ENCODE measurements at regions of chr3 and their contacts with region 1.

Region 1: GRCh38 chr3:127970966-127971592 is 56.0 kb downstream of the KBTBD12 start:
- DNase-seq: peak; percentile 60
- ATAC-seq: peak; percentile 86
- H3K4me3 ChIP-seq: no peak overlapping the region
- H3K27ac ChIP-seq: no peak overlapping the region
- H3K4me1 ChIP-seq: no peaks in the 10 kb centered on the region
- H3K27me3 ChIP-seq: peaks cover 51% of the 10 kb centered on the region
- CTCF ChIP-seq: peak; percentile 72
- POLR2A ChIP-seq: no peak
- RAD21 ChIP-seq: peak; percentile 86

Region 2: DNA sequence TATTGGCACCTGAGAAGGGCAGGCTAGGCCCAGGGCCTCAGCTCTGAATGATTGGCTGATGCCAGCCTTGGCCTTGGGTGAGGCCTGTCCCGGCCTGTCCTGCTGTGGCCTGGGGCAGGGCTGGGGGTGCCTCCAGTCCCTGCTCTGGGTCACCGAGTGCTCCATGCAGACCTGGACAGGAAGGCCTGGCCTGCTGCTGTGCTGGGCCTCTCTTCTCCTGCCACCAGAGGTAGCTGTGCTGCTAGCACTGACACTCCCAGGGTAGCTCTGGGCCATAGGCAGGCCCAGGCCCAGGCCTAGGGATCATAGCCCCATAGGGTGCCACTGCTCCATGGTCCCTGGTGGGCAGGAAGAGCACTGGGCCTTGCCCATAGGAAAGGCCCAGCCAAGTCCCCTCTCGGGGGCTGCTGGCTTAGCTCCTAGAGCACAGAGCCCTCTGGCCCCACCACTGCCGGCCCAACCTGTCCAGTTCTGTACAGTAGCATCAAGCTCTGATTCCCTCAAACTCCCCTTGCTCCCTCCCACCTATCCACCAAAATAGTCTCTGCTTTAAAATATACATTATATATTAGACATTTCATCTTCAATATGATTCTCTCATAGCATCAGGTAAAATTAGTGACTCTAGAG is 280.1 kb before region 1 on chr3:
- CTCF ChIA-PET with region 1: interaction called, 3 read pairs
- POLR2A ChIA-PET with region 1: no interaction called
- dilution Hi-C with region 1: no loop called
- in situ Hi-C with region 1: no loop called
- intact Hi-C with region 1: loop called (anchors 2 kb)
- DNase-seq: peak; percentile 70
- ATAC-seq: peak; percentile 73
- H3K4me3 ChIP-seq: no peak overlapping the region
- H3K27ac ChIP-seq: peak overlapping the region; percentile 80
- H3K4me1 ChIP-seq: peaks cover 26% of the 10 kb centered on the region
- H3K27me3 ChIP-seq: no peaks in the 10 kb centered on the region
- CTCF ChIP-seq: peak; percentile 74
- POLR2A ChIP-seq: no peak
- RAD21 ChIP-seq: peak; percentile 78

Region 3: DNA sequence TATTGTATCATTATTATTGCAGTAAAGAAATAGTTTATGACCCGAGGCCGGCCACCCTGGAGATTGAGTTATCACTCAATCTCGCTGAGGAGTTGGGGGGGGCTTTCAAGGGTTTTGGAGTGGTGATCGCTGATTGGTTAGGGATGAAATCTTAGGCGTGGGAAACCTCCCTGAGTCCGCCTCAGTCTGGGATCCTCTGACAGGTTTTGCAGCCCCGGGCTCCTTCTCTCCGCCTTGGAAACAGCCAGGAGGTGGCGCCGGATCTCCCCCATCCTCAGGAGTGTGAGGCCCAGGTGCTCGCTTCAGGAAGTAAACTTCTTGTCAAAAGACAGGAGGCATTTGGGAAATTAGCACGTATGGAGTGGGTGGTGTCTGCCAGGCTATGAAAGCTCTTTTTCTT is 40.1 kb after region 1 on chr3:
- CTCF ChIA-PET with region 1: no interaction called
- POLR2A ChIA-PET with region 1: interaction called, 12 read pairs
- dilution Hi-C with region 1: no loop called
- in situ Hi-C with region 1: no loop called
- intact Hi-C with region 1: no loop called
- DNase-seq: peak; percentile 10
- ATAC-seq: no peak
- H3K4me3 ChIP-seq: no peak overlapping the region
- H3K27ac ChIP-seq: no peak overlapping the region
- H3K4me1 ChIP-seq: peaks cover 2% of the 10 kb centered on the region; the same call in 1 of the 2 replicates
- H3K27me3 ChIP-seq: peaks cover 16% of the 10 kb centered on the region
- CTCF ChIP-seq: peak; percentile 29
- POLR2A ChIP-seq: no peak
- RAD21 ChIP-seq: peak; percentile 24

Measured in IMR-90 (cell line).